SK-N-SH (cell line): ENCODE measurements at regions of chr7 and their contacts with region 1.

Region 1: DNA sequence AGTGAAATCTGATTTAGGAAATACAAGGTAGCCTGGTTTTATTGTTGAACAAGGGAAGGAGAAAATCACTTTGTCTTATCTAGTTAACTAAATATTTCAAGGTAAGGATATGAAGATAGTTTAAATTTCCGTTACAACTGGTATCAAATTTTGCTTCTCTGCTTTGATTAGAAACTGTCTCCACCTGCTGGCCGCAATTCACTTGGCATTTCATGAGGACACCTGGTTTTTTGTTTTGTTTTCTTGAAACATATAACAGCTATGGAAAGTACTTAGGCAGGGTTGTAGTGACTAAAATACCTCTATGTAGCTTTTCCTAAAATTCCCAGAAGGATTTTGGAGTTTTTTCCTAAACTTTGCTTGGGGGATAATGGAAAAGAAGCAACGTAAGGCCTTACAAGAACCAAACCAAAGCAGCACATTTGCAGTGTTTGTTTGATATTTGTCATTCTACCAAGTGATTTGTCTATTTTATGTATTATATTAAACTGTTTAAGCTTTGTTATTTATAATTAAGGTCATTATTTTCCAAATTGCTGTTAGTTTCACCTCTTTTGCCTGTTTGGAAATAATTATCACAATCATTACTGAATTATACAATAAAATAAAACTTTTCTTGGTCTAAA is 73.6 kb downstream of the AHCYL2 start:
- DNase-seq: peak; percentile 65
- H3K4me3 ChIP-seq: no peak overlapping the region; a peak in 1 of 4 replicates
- H3K27ac ChIP-seq: no peak overlapping the region
- H3K4me1 ChIP-seq: no peaks in the 10 kb centered on the region
- H3K27me3 ChIP-seq: no peaks in the 10 kb centered on the region
- CTCF ChIP-seq: peak; percentile 98
- EP300 ChIP-seq: no peak
- RAD21 ChIP-seq: peak; percentile 90

Region 2: GRCh38 chr7:129210256-129210988 is 88.0 kb before region 1 on chr7:
- CTCF ChIA-PET with region 1: interaction called, 48 read pairs
- POLR2A ChIA-PET with region 1: no interaction called
- DNase-seq: peak; percentile 94
- H3K4me3 ChIP-seq: no peak overlapping the region; a peak in 1 of 4 replicates
- H3K27ac ChIP-seq: no peak overlapping the region
- H3K4me1 ChIP-seq: peaks cover 0 to 6% of the 10 kb centered on the region in 2 experiments; a peak in 1 of 4 replicates
- H3K27me3 ChIP-seq: no peaks in the 10 kb centered on the region
- CTCF ChIP-seq: peak; percentile 96
- EP300 ChIP-seq: no peak
- RAD21 ChIP-seq: peak; percentile 89

Region 3: GRCh38 chr7:129252128-129252527 is 46.3 kb before region 1 on chr7:
- CTCF ChIA-PET with region 1: interaction called, 19 read pairs
- POLR2A ChIA-PET with region 1: no interaction called
- DNase-seq: peak; percentile 36
- H3K4me3 ChIP-seq: no peak overlapping the region
- H3K27ac ChIP-seq: no peak overlapping the region
- H3K4me1 ChIP-seq: peaks cover 0 to 6% of the 10 kb centered on the region in 2 experiments; a peak in 3 of 4 replicates
- H3K27me3 ChIP-seq: no peaks in the 10 kb centered on the region
- CTCF ChIP-seq: no peak
- EP300 ChIP-seq: peak in 1 of 2 experiments; percentile 12; a peak in 1 of 4 replicates
- RAD21 ChIP-seq: no peak

Region 4: DNA sequence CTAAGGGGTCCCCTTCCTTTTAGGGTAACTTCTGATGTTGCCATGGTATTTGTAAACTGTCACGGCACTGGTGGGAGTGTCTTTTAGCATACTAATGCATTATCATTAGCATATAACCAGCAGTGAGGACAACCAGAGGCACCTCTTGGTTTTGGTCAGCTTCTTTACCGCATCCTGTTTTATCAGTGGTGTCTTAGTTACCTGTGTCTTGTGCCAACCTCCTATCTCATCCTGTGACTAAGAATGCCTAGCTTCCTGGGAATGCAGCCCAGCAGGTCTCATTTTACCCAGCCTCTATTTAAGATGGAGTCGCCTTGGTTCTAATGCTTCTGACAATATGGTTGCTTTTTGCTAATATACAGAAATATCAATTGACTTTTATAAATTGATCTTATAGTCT is 18.6 kb before region 1 on chr7:
- CTCF ChIA-PET with region 1: interaction called, 78 read pairs
- POLR2A ChIA-PET with region 1: no interaction called
- DNase-seq: no peak
- H3K4me3 ChIP-seq: no peak overlapping the region
- H3K27ac ChIP-seq: no peak overlapping the region
- H3K4me1 ChIP-seq: peaks cover 0 to 6% of the 10 kb centered on the region in 2 experiments; a peak in 1 of 4 replicates
- H3K27me3 ChIP-seq: no peaks in the 10 kb centered on the region
- CTCF ChIP-seq: no peak
- EP300 ChIP-seq: no peak
- RAD21 ChIP-seq: no peak

Region 5: GRCh38 chr7:129332284-129333035 is 34.1 kb after region 1 on chr7:
- CTCF ChIA-PET with region 1: interaction called, 10 read pairs
- POLR2A ChIA-PET with region 1: no interaction called
- DNase-seq: no peak
- H3K4me3 ChIP-seq: no peak overlapping the region
- H3K27ac ChIP-seq: peak overlapping the region in 1 of 2 experiments; percentile 80; a peak in 2 of 4 replicates
- H3K4me1 ChIP-seq: no peaks in the 10 kb centered on the region
- H3K27me3 ChIP-seq: no peaks in the 10 kb centered on the region
- CTCF ChIP-seq: no peak
- EP300 ChIP-seq: no peak
- RAD21 ChIP-seq: no peak

Region 6: GRCh38 chr7:129367700-129368388 is 69.5 kb after region 1 on chr7:
- CTCF ChIA-PET with region 1: interaction called, 10 read pairs
- POLR2A ChIA-PET with region 1: no interaction called
- DNase-seq: peak; percentile 80
- H3K4me3 ChIP-seq: no peak overlapping the region; a peak in 1 of 4 replicates
- H3K27ac ChIP-seq: no peak overlapping the region
- H3K4me1 ChIP-seq: peaks cover 0 to 3% of the 10 kb centered on the region in 2 experiments; a peak in 1 of 4 replicates
- H3K27me3 ChIP-seq: no peaks in the 10 kb centered on the region
- CTCF ChIP-seq: peak; percentile 99
- EP300 ChIP-seq: no peak
- RAD21 ChIP-seq: peak; percentile 96

Region 7: GRCh38 chr7:129433847-129434674 is 135.7 kb after region 1 on chr7 and contains the start of gene STRIP2:
- CTCF ChIA-PET with region 1: no interaction called
- POLR2A ChIA-PET with region 1: no interaction called
- DNase-seq: peak; percentile 97
- H3K4me3 ChIP-seq: peak within 1 kb of the TSS; percentile 85 to 93
- H3K27ac ChIP-seq: peak within 1 kb of the TSS; percentile 39 to 81; a peak in 3 of 4 replicates
- H3K4me1 ChIP-seq: peaks cover 7 to 15% of the 10 kb centered on the region in 2 experiments; a peak in 3 of 4 replicates
- H3K27me3 ChIP-seq: no peaks in the 10 kb centered on the region
- CTCF ChIP-seq: peak; percentile 44
- EP300 ChIP-seq: no peak; a peak in 1 of 4 replicates
- RAD21 ChIP-seq: peak; percentile 11; the same call in 1 of the 2 replicates
- polyA plus RNA-seq, gene STRIP2: 4.9 and 6.9 TPM in 2 replicates